ENCODE measurements at regions of chrX and their contacts with region 1.

Region 1: DNA sequence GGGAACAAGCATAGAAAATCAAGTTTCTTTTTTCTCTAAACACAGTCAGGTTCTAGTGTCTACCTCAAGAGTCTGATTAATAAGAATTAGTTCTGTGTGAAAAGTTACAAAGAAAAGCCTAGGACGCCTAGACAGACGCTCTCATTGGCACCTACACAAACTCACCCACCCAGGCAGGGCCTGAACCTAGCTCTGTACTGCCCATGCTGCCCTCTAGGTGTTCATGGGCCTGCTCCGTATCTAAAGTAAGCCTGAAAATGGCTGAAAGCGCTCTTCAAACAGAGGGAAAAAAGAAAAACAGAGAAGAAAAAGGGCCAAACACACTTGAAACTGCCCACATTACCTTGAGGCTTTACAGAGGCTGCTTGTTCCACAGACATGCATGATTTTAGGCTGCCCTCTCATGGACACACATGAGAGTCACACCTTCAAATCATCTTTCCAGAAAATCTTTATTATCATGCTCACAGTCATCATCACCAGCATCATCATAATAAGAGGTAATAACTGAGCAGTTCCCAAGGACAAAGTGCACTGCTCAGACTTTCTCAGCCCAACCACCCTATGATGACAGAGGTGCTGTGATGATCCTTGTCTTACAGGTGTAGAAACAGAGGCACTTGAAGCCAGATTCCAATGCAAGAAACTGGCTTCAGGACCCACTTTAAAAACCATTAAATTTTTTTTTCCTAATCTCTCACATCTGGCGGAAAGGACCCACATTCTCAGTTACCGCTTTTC is 49.6 kb downstream of the MAP7D2 start:
- DNase-seq: peak; percentile 72
- H3K4me3 Mint-ChIP-seq: peak overlapping the region; percentile 9
- H3K27ac Mint-ChIP-seq: peak overlapping the region; percentile 80
- H3K4me1 Mint-ChIP-seq: peaks cover 24% of the 10 kb centered on the region
- H3K27me3 Mint-ChIP-seq: peaks cover 42% of the 10 kb centered on the region
- CTCF ChIP-seq: peak; percentile 81

Region 2: GRCh38 chrX:19593690-19594089 is 473.4 kb before region 1 on chrX:
- CTCF ChIA-PET with region 1: interaction called, 12 read pairs
- POLR2A ChIA-PET with region 1: no interaction called
- intact Hi-C with region 1: loop called (anchors 1 kb)
- DNase-seq: peak; percentile 64
- H3K4me3 Mint-ChIP-seq: no peak overlapping the region
- H3K27ac Mint-ChIP-seq: no peak overlapping the region
- H3K4me1 Mint-ChIP-seq: no peaks in the 10 kb centered on the region
- H3K27me3 Mint-ChIP-seq: peaks cover 31% of the 10 kb centered on the region
- CTCF ChIP-seq: peak; percentile 57

Region 3: GRCh38 chrX:19739683-19740082 is 327.5 kb before region 1 on chrX:
- CTCF ChIA-PET with region 1: no interaction called
- POLR2A ChIA-PET with region 1: no interaction called
- intact Hi-C with region 1: loop called (anchors 1 kb)
- DNase-seq: peak; percentile 82
- H3K4me3 Mint-ChIP-seq: no peak overlapping the region
- H3K27ac Mint-ChIP-seq: no peak overlapping the region
- H3K4me1 Mint-ChIP-seq: no peaks in the 10 kb centered on the region
- H3K27me3 Mint-ChIP-seq: peaks cover 65% of the 10 kb centered on the region
- CTCF ChIP-seq: peak; percentile 52

Region 4: GRCh38 chrX:19990556-19991349 is 76.4 kb before region 1 on chrX and contains the start of gene BCLAF3:
- CTCF ChIA-PET with region 1: interaction called, 6 read pairs
- POLR2A ChIA-PET with region 1: no interaction called
- intact Hi-C with region 1: loop called (anchors 1 kb)
- DNase-seq: peak; percentile 80
- H3K4me3 Mint-ChIP-seq: peak within 1 kb of the TSS; percentile 69
- H3K27ac Mint-ChIP-seq: peak within 1 kb of the TSS; percentile 1
- H3K4me1 Mint-ChIP-seq: peaks cover 7% of the 10 kb centered on the region
- H3K27me3 Mint-ChIP-seq: peaks cover 22% of the 10 kb centered on the region
- CTCF ChIP-seq: peak; percentile 70
- total RNA-seq, gene BCLAF3: 8.6 and 9.6 TPM in 2 replicates

Region 5: DNA sequence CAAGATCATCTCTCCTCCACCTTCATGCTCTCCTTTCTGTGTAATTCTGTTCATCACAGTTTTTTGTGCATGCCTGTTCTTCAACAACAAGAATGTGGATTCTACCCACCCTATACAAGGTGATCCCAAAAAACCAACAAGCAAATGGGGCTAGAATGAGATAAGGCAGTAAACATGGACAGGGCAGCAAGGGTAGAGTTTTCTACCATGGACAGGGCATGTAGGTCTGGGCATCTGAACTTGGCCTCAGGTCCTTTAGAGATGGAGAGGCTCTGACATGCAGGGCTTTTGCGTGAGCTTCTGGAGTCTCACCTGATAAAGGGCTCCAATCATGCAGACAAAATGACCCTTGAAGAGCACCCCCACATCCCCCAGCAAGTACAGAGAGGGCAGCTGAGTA is 13.1 kb after region 1 on chrX:
- CTCF ChIA-PET with region 1: interaction called, 27 read pairs
- POLR2A ChIA-PET with region 1: interaction called, 5 read pairs
- intact Hi-C with region 1: no loop called
- DNase-seq: no peak
- H3K4me3 Mint-ChIP-seq: no peak overlapping the region
- H3K27ac Mint-ChIP-seq: no peak overlapping the region
- H3K4me1 Mint-ChIP-seq: no peaks in the 10 kb centered on the region
- H3K27me3 Mint-ChIP-seq: peaks cover 32% of the 10 kb centered on the region
- CTCF ChIP-seq: no peak

Region 6: DNA sequence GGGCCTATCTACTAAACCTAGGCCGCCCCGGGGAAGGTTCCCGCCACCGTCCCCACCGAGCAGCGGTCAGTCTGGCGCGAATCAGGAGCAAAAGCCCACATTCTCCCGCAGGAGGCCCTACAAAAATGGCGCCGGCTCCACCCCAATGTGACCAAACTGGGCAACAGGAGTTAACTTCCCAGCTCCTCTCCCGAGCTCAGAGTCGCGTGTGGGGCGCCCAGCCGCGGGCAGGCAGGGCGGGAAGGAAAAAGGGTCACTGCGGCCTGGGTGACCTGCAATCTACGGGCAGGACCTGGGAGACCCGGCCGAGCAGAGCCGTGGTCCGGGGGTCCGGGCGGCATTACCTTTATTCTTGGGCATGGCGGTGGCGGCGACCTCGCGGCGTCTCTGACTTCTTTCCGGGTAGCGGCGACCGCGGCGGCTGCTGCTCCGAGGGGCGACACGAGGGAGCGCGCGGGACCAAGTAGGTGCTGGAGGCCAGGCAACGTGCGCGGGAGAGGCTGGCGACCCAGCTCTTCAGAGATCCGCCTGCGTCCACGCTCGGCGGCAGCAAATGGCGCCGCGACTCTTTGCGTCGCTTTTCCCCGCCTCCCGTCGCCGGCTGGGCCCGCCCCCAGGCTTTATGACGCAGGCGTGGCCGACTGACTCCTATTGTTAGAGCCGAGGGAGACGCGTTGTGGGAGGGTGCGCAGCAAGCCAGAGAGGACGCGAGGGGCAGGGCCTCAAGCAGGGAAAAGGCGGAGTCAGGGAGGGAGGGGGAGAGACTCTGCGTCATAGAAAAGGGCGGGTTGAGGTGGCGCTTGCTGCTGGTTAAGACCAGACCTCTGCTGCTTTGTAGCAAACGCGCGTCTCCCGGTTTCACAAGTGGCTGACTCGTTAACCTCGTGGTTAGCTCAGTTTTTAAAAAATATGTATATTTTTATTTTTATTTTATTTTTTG is 74.4 kb after region 1 on chrX and contains the start of gene EIF1AX:
- CTCF ChIA-PET with region 1: interaction called, 3 read pairs
- POLR2A ChIA-PET with region 1: interaction called, 15 read pairs
- intact Hi-C with region 1: no loop called
- DNase-seq: peak; percentile 100
- H3K4me3 Mint-ChIP-seq: peak within 1 kb of the TSS; percentile 87
- H3K27ac Mint-ChIP-seq: peak within 1 kb of the TSS; percentile 87
- H3K4me1 Mint-ChIP-seq: peaks cover 11% of the 10 kb centered on the region
- H3K27me3 Mint-ChIP-seq: no peaks in the 10 kb centered on the region
- CTCF ChIP-seq: no peak
- total RNA-seq, gene EIF1AX: 183 and 209 TPM in 2 replicates